Activated B cell treated with CpG ODN at 0.5 μM for 24 hours (primary cell): ENCODE measurements at regions of chr14 and their contacts with region 1.

Region 1: DNA sequence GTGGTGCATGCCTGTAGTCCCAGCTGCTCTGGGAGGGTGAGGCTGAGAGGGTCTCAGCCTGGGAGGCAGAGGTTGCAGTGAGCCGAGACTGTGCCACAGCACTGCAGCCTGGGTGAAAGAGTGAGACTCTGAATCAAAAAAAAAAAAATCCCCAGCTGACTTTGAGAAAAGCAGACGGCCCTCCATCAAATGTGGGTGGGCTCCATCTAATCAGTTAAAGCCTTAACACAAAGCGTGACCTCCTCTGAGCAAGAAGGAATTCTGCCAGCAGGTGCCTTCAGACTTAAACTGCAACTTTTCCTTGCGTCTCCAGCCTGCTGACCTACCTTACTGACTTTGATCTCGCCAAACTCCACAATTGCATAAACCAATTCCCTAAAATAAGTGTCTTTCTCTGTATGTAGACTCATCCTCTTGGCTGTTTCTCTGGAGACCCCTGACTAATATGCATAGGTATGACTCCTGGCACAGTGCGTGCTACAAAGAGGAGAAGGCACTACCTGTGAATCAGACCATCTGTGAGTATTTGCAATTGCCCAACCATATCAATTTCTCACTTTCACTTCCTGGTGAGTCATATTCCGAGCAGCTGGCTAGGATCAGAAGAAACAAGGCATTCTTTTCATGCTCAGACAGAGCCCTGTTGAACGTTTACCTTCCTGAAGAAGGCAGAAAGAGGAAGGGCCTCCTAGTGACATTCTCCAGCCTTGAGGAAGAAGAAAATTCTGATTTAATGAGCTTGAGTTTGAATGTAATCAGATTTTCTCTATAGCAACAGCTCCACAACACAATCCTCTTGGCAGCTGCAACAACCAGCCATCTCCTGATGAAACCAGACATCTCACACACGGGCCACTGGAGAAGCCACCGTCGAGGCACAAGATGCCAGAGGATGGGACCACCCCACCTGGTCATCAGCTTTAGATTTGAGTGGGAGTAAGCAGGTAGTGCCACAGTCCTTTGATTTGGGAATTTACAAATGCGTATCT is 54.3 kb downstream of the CLMN start:
- DNase-seq: peak; percentile 25
- ATAC-seq: peak; percentile 88
- H3K4me3 Mint-ChIP-seq: peak overlapping the region; percentile 63
- H3K27ac Mint-ChIP-seq: peak overlapping the region; percentile 87
- H3K4me1 Mint-ChIP-seq: peaks cover 55% of the 10 kb centered on the region
- H3K27me3 Mint-ChIP-seq: no peaks in the 10 kb centered on the region
- CTCF ChIP-seq: no peak

Region 2: GRCh38 chr14:93970549-93970946 is 1294.9 kb before region 1 on chr14:
- CTCF ChIA-PET with region 1: no interaction called
- POLR2A ChIA-PET with region 1: no interaction called
- intact Hi-C with region 1: loop called (anchors 5 kb)
- DNase-seq: peak; percentile 42
- ATAC-seq: peak; percentile 51
- H3K4me3 Mint-ChIP-seq: peak overlapping the region; percentile 89
- H3K27ac Mint-ChIP-seq: peak overlapping the region; percentile 89
- H3K4me1 Mint-ChIP-seq: peaks cover 70% of the 10 kb centered on the region
- H3K27me3 Mint-ChIP-seq: peaks cover 8% of the 10 kb centered on the region
- CTCF ChIP-seq: no peak

Region 3: DNA sequence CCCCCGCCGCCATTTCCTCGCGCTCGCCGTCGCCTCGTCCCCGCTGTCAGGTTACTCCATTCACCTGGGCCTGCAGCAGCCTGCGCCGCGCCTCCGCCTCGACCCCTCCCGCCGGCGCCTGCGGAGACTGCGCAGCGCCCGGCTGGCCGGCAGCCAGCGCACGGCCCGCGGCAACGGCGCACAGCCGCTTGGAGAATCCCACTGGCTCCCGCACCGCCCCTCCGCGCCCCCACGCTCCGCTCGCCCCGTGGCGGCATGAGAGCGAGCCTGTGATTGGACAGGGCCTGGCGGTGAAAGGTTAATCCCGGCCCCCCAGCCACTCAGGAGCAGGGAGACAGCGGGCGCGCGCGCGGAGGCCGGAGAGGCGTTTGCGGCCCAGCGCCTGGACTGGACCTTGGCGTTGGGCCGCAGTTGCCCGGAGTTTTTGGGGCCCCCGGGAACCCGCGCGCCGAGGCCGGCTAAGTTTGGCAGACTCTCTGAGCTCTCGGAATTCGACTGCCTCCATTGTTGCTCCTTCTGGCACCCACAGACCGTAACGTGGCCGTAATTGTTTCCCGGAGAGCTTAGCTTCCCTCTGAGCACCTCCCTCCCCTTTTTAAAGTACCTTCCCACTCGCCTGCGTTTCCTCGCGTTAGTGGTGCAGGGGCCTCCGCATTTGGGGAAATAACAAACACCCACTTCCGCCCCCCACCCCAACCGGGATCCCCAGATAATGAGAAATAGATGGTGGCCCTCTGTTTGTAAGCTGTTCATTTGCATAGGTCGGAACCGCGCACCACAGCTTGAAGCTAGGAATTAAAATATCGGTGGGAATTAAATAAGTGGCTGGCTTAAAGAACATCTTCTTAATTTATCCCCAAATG is 107.8 kb before region 1 on chr14 and contains the start of gene DICER1:
- CTCF ChIA-PET with region 1: no interaction called
- POLR2A ChIA-PET with region 1: interaction called, 5 read pairs
- intact Hi-C with region 1: loop called (anchors 1 kb)
- DNase-seq: peak; percentile 96
- ATAC-seq: peak; percentile 87
- H3K4me3 Mint-ChIP-seq: peak within 1 kb of the TSS; percentile 97
- H3K27ac Mint-ChIP-seq: peak within 1 kb of the TSS; percentile 100
- H3K4me1 Mint-ChIP-seq: peaks cover 45% of the 10 kb centered on the region
- H3K27me3 Mint-ChIP-seq: no peaks in the 10 kb centered on the region
- CTCF ChIP-seq: no peak
- total RNA-seq, gene DICER1: 67.3 and 69.6 TPM in 2 replicates

Region 4: GRCh38 chr14:95294834-95295599 is 29.6 kb after region 1 on chr14:
- CTCF ChIA-PET with region 1: no interaction called
- POLR2A ChIA-PET with region 1: interaction called, 11 read pairs
- intact Hi-C with region 1: loop called (anchors 1 kb)
- DNase-seq: no peak
- ATAC-seq: peak; percentile 73
- H3K4me3 Mint-ChIP-seq: no peak overlapping the region
- H3K27ac Mint-ChIP-seq: no peak overlapping the region
- H3K4me1 Mint-ChIP-seq: peaks cover 76% of the 10 kb centered on the region
- H3K27me3 Mint-ChIP-seq: no peaks in the 10 kb centered on the region
- CTCF ChIP-seq: no peak

Region 5: DNA sequence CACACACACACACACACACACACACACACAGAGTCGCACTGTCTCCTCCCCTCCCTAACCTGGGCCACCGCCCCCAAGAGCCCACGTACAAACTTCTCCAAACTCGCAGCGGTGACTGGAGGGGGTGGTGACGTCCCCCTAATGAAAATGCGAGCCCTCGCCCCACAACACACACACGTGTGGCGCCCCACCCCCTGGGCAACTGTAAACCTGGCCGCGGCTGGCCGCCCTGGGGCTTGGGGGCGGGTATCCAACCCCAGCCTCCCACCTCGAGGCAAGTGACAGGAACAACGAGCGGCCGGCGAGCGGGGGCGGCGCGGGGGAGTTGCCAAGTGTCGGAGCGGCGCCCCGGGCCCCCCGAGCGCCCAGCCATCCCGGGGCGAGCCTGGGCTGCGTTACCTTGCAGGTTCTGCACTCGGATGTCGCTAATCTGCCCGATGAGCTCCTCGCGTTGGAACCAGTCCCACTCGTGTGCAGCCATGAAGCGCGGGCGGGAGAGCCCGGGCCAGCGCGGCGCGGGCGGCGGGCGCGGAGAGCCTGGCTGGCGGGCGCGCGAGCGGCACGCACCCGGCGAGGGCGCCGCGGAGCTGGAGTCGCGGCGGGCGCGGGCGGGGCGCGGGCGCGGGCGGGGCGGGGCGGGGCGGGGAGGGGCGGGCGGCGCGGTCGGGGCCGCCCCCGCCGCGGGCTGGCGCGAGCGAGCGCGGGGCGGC is 54.1 kb after region 1 on chr14 and contains the start of gene CLMN:
- CTCF ChIA-PET with region 1: interaction called, 3 read pairs
- POLR2A ChIA-PET with region 1: interaction called, 8 read pairs
- intact Hi-C with region 1: loop called (anchors 2 kb)
- DNase-seq: peak; percentile 58
- ATAC-seq: peak; percentile 72
- H3K4me3 Mint-ChIP-seq: peak within 1 kb of the TSS; percentile 87
- H3K27ac Mint-ChIP-seq: peak within 1 kb of the TSS; percentile 75
- H3K4me1 Mint-ChIP-seq: peaks cover 28% of the 10 kb centered on the region
- H3K27me3 Mint-ChIP-seq: no peaks in the 10 kb centered on the region
- CTCF ChIP-seq: no peak
- total RNA-seq, gene CLMN: 23.4 and 23.9 TPM in 2 replicates

Region 6: DNA sequence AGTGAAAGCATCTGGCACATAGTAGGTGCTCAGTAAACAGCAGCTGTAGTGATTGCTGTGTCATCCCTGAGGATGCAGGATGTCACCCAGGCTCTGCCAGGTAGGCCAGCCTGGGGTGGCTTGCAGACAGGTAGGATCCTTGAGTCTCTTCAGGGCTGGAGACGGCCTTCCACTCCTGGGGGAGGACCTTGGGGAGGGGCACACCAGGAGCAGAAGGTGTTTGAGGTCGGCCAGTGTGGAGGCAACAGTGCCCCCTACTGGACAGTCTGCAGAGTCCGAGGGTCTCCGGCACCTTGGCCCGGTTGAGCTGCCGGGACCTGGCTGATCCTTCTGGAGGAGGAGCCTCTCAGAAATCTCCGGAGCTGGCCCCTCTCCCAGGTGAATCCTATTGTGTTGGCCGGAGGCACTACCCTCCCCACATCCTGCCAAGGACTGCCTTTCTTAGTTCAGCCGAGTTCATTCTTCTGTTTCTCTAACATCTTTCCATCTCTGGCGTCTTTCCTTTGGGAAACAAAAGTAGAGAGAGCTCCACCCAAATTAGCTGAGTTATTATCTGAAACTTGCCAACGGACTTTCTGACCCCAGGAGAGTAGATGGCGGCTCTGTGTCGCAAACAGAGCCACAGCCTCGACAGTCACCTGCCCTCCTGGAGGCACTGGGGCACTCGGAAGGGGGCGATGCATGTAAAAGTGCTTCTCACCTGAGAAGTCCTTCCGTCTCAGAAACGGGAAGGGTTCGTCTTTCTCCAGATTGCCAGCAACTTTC is 96.2 kb after region 1 on chr14:
- CTCF ChIA-PET with region 1: interaction called, 4 read pairs
- POLR2A ChIA-PET with region 1: no interaction called
- intact Hi-C with region 1: loop called (anchors 1 kb)
- DNase-seq: peak; percentile 50
- ATAC-seq: peak; percentile 84
- H3K4me3 Mint-ChIP-seq: peak overlapping the region; percentile 15
- H3K27ac Mint-ChIP-seq: no peak overlapping the region
- H3K4me1 Mint-ChIP-seq: peaks cover 10% of the 10 kb centered on the region
- H3K27me3 Mint-ChIP-seq: peaks cover 50% of the 10 kb centered on the region
- CTCF ChIP-seq: no peak

Region 7: GRCh38 chr14:96501742-96502617 is 1236.6 kb after region 1 on chr14 and contains the start of gene PAPOLA:
- CTCF ChIA-PET with region 1: no interaction called
- POLR2A ChIA-PET with region 1: no interaction called
- intact Hi-C with region 1: loop called (anchors 10 kb)
- DNase-seq: peak; percentile 96
- ATAC-seq: peak; percentile 85
- H3K4me3 Mint-ChIP-seq: peak within 1 kb of the TSS; percentile 99
- H3K27ac Mint-ChIP-seq: peak within 1 kb of the TSS; percentile 97
- H3K4me1 Mint-ChIP-seq: peaks cover 64% of the 10 kb centered on the region
- H3K27me3 Mint-ChIP-seq: no peaks in the 10 kb centered on the region
- CTCF ChIP-seq: no peak
- total RNA-seq, gene PAPOLA: 205 and 255 TPM in 2 replicates

Region 8: DNA sequence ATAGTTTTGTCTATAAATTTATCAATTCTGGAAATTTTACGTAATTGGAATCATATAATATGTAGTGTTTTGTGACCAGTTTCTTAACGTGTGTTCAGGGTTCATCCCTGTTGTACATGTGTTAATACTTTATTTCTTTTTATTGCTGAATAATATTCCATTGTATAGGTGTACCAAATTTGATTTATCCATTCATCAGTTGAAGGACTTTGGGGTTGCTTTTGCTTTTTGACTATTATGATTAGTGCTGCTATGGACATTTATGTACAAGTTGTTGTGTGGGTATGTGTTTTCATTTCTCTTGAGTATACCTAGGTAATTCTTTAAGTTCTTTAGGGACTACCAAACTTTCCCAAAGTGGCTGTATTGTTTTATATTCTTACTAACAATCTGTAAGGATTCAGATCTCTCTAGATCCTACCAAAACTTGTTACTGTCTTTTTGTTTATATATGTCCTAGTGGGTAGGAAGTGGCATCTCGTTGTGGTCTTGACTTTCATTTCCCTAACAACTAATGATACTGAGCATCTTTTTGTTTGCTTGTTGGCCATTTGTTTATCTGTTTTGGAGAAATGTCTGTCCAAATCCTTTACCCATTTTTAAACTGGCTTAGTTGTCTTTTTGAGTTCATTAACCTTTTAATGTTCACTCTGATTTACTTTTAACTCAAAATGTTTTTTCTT is 1546.7 kb after region 1 on chr14:
- CTCF ChIA-PET with region 1: no interaction called
- POLR2A ChIA-PET with region 1: no interaction called
- intact Hi-C with region 1: no loop called
- DNase-seq: no peak
- ATAC-seq: no peak
- H3K4me3 Mint-ChIP-seq: no peak overlapping the region
- H3K27ac Mint-ChIP-seq: no peak overlapping the region
- H3K4me1 Mint-ChIP-seq: peaks cover 28% of the 10 kb centered on the region
- H3K27me3 Mint-ChIP-seq: no peaks in the 10 kb centered on the region
- CTCF ChIP-seq: no peak